HepG2 (cell line): ENCODE measurements at regions of chr15 and their contacts with region 1.

Region 1: GRCh38 chr15:39404767-39405181 is 176.1 kb upstream of the THBS1 start:
- DNase-seq: no peak
- ATAC-seq: no peak
- H3K4me3 ChIP-seq: no peak overlapping the region
- H3K27ac ChIP-seq: no peak overlapping the region
- H3K4me1 ChIP-seq: peaks cover 6% of the 10 kb centered on the region; the same call in 1 of the 2 replicates
- H3K27me3 ChIP-seq: no peaks in the 10 kb centered on the region; a peak in 2 of 5 replicates
- CTCF ChIP-seq: no peak
- EP300 ChIP-seq: no peak
- POLR2A ChIP-seq: no peak
- RAD21 ChIP-seq: no peak

Region 2: GRCh38 chr15:39362821-39363561 is 41.8 kb before region 1 on chr15:
- CTCF ChIA-PET with region 1: no interaction called
- POLR2A ChIA-PET with region 1: no interaction called
- in situ Hi-C with region 1: no loop called
- intact Hi-C with region 1: loop called (anchors 5 kb)
- DNase-seq: no peak
- ATAC-seq: no peak
- H3K4me3 ChIP-seq: no peak overlapping the region
- H3K27ac ChIP-seq: peak overlapping the region; percentile 18
- H3K4me1 ChIP-seq: peaks cover 68% of the 10 kb centered on the region
- H3K27me3 ChIP-seq: no peaks in the 10 kb centered on the region
- CTCF ChIP-seq: no peak
- EP300 ChIP-seq: no peak
- POLR2A ChIP-seq: no peak
- RAD21 ChIP-seq: no peak

Region 3: GRCh38 chr15:39987821-39988220 is 583.0 kb after region 1 on chr15:
- CTCF ChIA-PET with region 1: no interaction called
- POLR2A ChIA-PET with region 1: no interaction called
- in situ Hi-C with region 1: no loop called
- intact Hi-C with region 1: no loop called
- DNase-seq: no peak
- ATAC-seq: no peak
- H3K4me3 ChIP-seq: no peak overlapping the region
- H3K27ac ChIP-seq: no peak overlapping the region
- H3K4me1 ChIP-seq: peaks cover 14% of the 10 kb centered on the region
- H3K27me3 ChIP-seq: no peaks in the 10 kb centered on the region
- CTCF ChIP-seq: no peak
- EP300 ChIP-seq: no peak
- POLR2A ChIP-seq: no peak
- RAD21 ChIP-seq: no peak